ENCODE measurements at regions of chr11 and their contacts with region 1.

Region 1: DNA sequence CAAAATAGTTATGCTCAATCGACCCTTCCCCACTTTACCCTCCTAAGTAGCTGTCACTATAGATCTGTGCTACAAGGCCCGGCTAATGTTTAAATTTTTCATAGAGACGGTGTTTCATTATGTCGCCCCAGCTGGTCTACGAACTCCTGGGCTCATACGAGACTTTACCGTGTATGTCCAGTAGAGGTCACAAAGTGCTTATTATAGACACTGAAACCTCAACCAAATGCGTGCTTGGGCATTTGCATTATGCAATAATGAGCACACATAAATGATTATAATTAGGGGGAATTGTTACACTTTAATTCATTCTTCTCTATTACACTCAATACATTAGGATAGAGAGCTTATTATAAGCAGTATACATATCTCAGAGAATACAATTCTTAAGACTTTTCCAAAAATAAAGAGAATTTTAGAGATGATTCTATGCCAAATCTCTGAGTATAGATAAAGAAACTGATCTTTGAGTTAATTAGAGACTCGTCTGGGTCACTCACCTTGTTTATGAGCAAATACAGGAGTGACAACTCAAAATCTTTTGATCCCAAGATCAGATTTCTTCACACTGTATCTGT is 12.5 kb upstream of the MRPL16 start:
- DNase-seq: peak; percentile 84
- H3K4me3 ChIP-seq: peak overlapping the region; percentile 37
- H3K27ac ChIP-seq: peak overlapping the region; percentile 57
- H3K4me1 ChIP-seq: peaks cover 51% of the 10 kb centered on the region
- CTCF ChIP-seq: peak; percentile 85

Region 2: GRCh38 chr11:59542142-59542810 is 280.8 kb before region 1 on chr11:
- CTCF ChIA-PET with region 1: no interaction called
- POLR2A ChIA-PET with region 1: no interaction called
- intact Hi-C with region 1: no loop called
- DNase-seq: no peak
- H3K4me3 ChIP-seq: no peak overlapping the region
- H3K27ac ChIP-seq: no peak overlapping the region
- H3K4me1 ChIP-seq: peaks cover 5% of the 10 kb centered on the region
- CTCF ChIP-seq: no peak

Region 3: DNA sequence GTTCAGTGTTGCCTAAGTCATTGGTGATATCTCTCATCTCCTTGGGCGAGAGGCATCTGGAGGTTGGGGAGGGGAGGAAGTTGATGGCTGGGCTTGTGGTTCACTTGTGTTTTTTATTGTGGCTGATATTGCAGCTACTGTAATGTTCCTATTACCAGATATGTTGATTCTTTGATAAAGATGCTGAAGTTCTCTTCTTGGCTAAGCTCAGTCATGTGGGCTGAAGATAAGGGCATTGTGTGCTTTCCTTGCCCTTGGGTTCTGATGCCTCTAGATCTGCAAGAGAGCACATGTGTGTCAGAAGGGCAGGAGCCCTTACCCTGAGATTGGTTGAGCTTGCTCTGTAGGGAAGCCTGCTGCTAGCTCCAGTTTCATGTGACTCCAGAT is 55.9 kb before region 1 on chr11:
- CTCF ChIA-PET with region 1: no interaction called
- POLR2A ChIA-PET with region 1: no interaction called
- intact Hi-C with region 1: no loop called
- DNase-seq: no peak
- H3K4me3 ChIP-seq: no peak overlapping the region
- H3K27ac ChIP-seq: no peak overlapping the region
- H3K4me1 ChIP-seq: peaks cover 35% of the 10 kb centered on the region
- CTCF ChIP-seq: no peak

Region 4: GRCh38 chr11:59918987-59919589 is 96.0 kb after region 1 on chr11:
- CTCF ChIA-PET with region 1: no interaction called
- POLR2A ChIA-PET with region 1: no interaction called
- intact Hi-C with region 1: loop called (anchors 2 kb)
- DNase-seq: peak; percentile 64
- H3K4me3 ChIP-seq: no peak overlapping the region
- H3K27ac ChIP-seq: no peak overlapping the region
- H3K4me1 ChIP-seq: no peaks in the 10 kb centered on the region
- CTCF ChIP-seq: peak; percentile 88

Region 5: GRCh38 chr11:60130496-60130895 is 307.4 kb after region 1 on chr11:
- CTCF ChIA-PET with region 1: no interaction called
- POLR2A ChIA-PET with region 1: no interaction called
- intact Hi-C with region 1: loop called (anchors 5 kb)
- DNase-seq: peak; percentile 61
- H3K4me3 ChIP-seq: no peak overlapping the region
- H3K27ac ChIP-seq: no peak overlapping the region
- H3K4me1 ChIP-seq: peaks cover 8% of the 10 kb centered on the region
- CTCF ChIP-seq: peak; percentile 77

Region 6: DNA sequence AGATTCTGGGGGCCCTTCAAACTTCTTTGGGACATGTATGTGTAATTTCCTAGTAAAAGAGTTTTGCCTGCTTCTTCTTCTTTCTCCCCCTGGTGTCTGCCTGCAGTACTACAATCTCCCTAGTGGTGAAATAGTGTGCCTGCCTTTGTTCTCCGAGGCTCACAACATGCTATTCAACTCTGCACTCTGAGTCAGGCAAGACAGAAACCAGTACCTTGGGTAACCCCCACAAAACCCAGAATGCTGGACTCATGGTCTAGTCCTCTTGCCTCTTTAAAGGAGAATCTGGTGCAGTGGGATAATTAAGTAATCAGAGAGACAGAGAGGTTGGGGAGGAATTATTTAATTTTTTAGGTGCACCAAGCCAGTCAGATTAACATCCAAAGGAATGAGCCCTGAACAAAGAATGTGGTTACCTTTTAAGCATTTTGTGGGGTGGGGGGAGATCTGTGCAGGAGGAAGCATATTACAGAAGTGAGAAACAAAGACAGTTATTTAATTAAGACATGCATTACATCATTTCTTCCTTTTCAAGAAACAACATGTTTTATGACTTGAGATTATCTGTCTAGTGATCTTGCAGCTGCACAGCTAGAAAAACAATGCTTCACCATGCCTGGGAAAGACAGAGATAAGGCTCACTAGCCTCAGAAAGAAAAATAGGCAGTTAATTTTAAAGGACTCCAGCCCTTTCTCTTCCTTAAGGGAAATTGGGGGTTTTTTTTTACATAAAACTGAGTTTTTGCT is 370.8 kb after region 1 on chr11:
- CTCF ChIA-PET with region 1: no interaction called
- POLR2A ChIA-PET with region 1: no interaction called
- intact Hi-C with region 1: loop called (anchors 5 kb)
- DNase-seq: peak; percentile 61
- H3K4me3 ChIP-seq: no peak overlapping the region
- H3K27ac ChIP-seq: no peak overlapping the region
- H3K4me1 ChIP-seq: no peaks in the 10 kb centered on the region
- CTCF ChIP-seq: peak; percentile 92

Region 7: GRCh38 chr11:60498853-60499252 is 675.8 kb after region 1 on chr11:
- CTCF ChIA-PET with region 1: no interaction called
- POLR2A ChIA-PET with region 1: no interaction called
- intact Hi-C with region 1: loop called (anchors 5 kb)
- DNase-seq: peak; percentile 95
- H3K4me3 ChIP-seq: peak overlapping the region; percentile 47
- H3K27ac ChIP-seq: peak overlapping the region; percentile 96
- H3K4me1 ChIP-seq: peaks cover 49% of the 10 kb centered on the region
- CTCF ChIP-seq: no peak